ENCODE measurements at regions of chr2 and their contacts with region 1.

Region 1: DNA sequence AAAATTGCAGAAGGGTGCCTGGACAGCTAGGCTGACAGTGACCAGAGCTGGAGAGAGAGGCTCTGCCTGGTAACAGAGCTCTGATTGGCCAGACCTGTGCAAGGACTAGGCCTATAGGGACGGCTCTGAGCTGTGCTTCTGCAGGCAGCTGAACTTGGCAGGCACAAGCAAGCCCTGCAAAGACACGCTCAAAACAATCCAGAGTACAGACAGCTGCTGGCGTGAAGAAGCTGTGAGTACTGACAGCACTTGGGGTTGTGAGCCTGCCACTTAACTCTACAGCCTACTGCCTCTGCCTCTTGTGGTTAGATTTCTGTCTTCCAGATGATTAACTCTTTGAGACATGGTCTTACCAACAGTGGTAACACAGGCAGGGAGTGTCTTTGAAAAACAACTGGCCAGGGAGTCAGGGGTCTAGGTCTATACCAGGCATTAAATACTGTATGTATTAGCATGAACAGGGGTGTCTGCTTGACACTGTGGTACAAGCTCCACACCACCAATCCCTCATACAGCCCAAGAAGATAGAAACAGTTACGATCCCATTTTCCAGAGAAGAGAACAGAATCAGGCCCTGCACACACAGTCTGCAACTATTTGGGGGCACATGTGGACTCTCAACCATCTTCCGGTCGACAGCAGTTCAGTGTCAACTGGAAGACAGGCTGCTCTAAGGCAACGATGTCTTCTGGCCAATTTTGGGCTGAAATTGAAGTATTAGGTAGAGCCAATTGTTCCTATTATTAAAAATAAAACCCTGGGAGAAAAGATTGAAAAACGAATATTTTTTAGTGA is 568.4 kb downstream of the TNS1 start:
- DNase-seq: peak; percentile 87 to 96 (median 93)
- ATAC-seq: peak; percentile 98 to 99 (median 99)
- H3K4me3 ChIP-seq: peak overlapping the region in 7 of 12 donors; percentile 11 to 30 (median 22)
- H3K27ac ChIP-seq: peak overlapping the region in 11 of 12 donors; percentile 44 to 80 (median 71)
- H3K4me1 ChIP-seq: peaks cover 0 to 71% (median 48%) of the 10 kb centered on the region in 12 donors
- H3K27me3 ChIP-seq: no peaks in the 10 kb centered on the region
- CTCF ChIP-seq: peak in 1 of 12 donors; percentile 12
- POLR2A ChIP-seq: no peak

Region 2: GRCh38 chr2:216692636-216693413 is 741.6 kb before region 1 on chr2:
- intact Hi-C with region 1: loop called in 3 of 10 experiments (anchors 5 to 10 kb)
- DNase-seq: peak; percentile 85 to 92 (median 90)
- ATAC-seq: peak; percentile 47 to 68 (median 55)
- H3K4me3 ChIP-seq: peak overlapping the region; percentile 53 to 80 (median 63)
- H3K27ac ChIP-seq: peak overlapping the region; percentile 58 to 93 (median 88)
- H3K4me1 ChIP-seq: peaks cover 0 to 69% (median 37%) of the 10 kb centered on the region in 12 donors
- H3K27me3 ChIP-seq: peaks cover 0 to 61% (median 0%) of the 10 kb centered on the region in 9 donors
- CTCF ChIP-seq: no peak
- POLR2A ChIP-seq: no peak

Region 3: GRCh38 chr2:217331523-217332139 is 102.7 kb before region 1 on chr2:
- intact Hi-C with region 1: loop called in 1 of 10 experiments (anchors 5 kb)
- DNase-seq: peak in 2 of 5 donors; percentile 14 to 25
- ATAC-seq: peak; percentile 83 to 92 (median 88)
- H3K4me3 ChIP-seq: no peak overlapping the region
- H3K27ac ChIP-seq: peak overlapping the region in 10 of 12 donors; percentile 51 to 88 (median 75)
- H3K4me1 ChIP-seq: peaks cover 0 to 36% (median 13%) of the 10 kb centered on the region in 12 donors
- H3K27me3 ChIP-seq: peaks cover 0 to 4% (median 0%) of the 10 kb centered on the region in 9 donors
- CTCF ChIP-seq: no peak
- POLR2A ChIP-seq: no peak

Region 4: GRCh38 chr2:217382794-217383193 is 51.6 kb before region 1 on chr2:
- intact Hi-C with region 1: loop called in 1 of 10 experiments (anchors 2 kb)
- DNase-seq: no peak
- ATAC-seq: peak; percentile 77 to 88 (median 84)
- H3K4me3 ChIP-seq: no peak overlapping the region
- H3K27ac ChIP-seq: peak overlapping the region in 10 of 12 donors; percentile 23 to 81 (median 65)
- H3K4me1 ChIP-seq: peaks cover 0 to 30% (median 5%) of the 10 kb centered on the region in 12 donors
- H3K27me3 ChIP-seq: no peaks in the 10 kb centered on the region
- CTCF ChIP-seq: no peak
- POLR2A ChIP-seq: no peak

Measured in heart left ventricle (tissue), 16 donors.